HEK293 (cell line): ENCODE measurements at regions of chr2 and their contacts with region 1.

Region 1: GRCh38 chr2:172113617-172114016 is 10.9 kb upstream of the DLX2 start:
- H3K4me3 ChIP-seq: no peak overlapping the region
- H3K27ac ChIP-seq: no peak overlapping the region
- H3K4me1 ChIP-seq: no peaks in the 10 kb centered on the region
- CTCF ChIP-seq: peak; percentile 79

Region 2: GRCh38 chr2:171574149-171574795 is 539.3 kb before region 1 on chr2:
- CTCF ChIA-PET with region 1: interaction called, 14 read pairs
- POLR2A ChIA-PET with region 1: no interaction called
- H3K4me3 ChIP-seq: no peak overlapping the region
- H3K27ac ChIP-seq: no peak overlapping the region
- H3K4me1 ChIP-seq: no peaks in the 10 kb centered on the region
- CTCF ChIP-seq: peak; percentile 91

Region 3: DNA sequence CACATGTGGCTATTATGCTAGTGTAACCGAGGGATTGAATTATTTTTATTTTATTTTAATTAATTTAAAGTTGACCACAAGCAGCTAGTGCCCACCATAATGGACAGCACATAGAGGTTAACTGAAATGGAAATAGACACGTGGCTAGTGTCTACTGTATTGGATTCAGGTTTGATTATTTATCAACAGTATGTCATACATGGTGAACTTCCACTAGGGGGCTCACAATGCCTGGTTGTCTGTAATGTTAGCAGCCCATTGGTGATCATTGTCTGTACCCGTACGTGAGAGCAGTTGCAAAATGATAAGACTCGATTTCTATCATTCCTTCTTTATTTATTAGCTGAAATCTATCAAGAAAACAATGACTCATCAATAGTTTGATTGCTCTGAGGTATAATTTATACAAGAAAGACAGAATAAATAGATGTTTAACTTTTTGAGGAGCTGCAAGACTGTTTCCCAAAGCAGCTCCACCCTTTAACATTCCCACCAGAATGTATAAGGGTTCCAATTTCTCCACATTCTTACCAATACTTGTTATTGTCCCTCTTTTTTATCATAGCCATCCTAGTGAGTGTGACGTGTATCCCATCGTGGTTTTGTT is 514.8 kb before region 1 on chr2:
- CTCF ChIA-PET with region 1: interaction called, 10 read pairs
- POLR2A ChIA-PET with region 1: no interaction called
- H3K4me3 ChIP-seq: no peak overlapping the region
- H3K27ac ChIP-seq: no peak overlapping the region
- H3K4me1 ChIP-seq: no peaks in the 10 kb centered on the region
- CTCF ChIP-seq: peak; percentile 43; the same call in 1 of the 2 replicates

Region 4: DNA sequence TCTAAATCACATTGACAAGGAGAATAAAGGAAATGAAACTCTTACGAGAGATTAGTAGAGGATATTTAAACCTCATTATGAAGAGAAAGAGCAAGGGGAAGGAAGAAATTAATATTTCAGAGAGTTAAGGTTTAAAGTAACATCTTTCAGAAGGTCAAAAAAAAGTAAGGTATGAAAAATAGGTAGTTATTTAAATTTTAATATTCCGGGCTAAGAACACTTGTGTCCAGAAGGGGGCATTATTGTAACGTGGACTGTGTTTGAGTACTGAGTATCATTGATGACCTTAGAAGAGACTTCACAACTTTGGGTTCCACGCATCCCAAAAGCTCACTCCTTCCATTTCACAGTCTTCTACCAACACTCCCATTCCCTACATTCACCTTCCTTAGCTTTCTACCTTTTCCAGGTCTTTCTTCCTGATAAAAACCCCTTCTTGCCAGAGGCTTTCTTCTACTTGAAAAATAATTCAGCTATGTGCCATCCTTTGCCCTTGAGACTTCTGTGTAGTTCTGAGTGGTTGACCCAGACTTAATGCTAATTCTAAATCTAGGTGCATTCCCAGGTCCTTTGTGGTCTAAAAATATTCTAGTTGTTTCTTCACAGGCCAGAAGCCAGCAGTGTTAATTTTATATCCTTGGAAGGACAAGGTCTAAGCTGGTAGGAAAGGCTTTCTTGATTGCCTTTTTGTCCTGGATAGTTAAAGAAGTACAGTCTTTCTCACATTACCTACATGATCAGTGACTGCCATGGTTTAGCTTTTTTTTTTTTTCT is 409.9 kb before region 1 on chr2:
- CTCF ChIA-PET with region 1: interaction called, 98 read pairs
- POLR2A ChIA-PET with region 1: no interaction called
- H3K4me3 ChIP-seq: no peak overlapping the region
- H3K27ac ChIP-seq: no peak overlapping the region
- H3K4me1 ChIP-seq: peaks cover 5% of the 10 kb centered on the region
- CTCF ChIP-seq: 0 out of 2 replicates have a peak, but pooled peaks have one; percentile 27

Region 5: DNA sequence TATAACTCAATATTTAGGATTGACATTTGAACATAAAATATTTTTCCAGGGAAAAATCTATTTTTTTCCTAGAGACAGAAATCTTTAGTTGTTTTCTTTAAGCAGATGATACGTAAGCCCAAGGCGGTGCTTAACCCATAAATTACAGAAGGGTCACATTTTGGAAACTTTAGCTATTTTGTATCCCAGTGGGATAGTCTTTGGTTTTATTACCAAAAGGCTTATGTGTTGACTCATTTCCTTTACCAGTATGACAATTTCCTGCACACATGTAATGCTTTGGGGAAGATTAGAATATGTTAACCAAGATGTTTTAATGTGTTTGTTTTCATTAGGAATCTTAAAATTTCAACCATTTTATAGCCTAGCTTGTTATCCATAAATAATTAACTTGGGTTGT is 401.6 kb before region 1 on chr2:
- CTCF ChIA-PET with region 1: interaction called, 98 read pairs
- POLR2A ChIA-PET with region 1: no interaction called
- H3K4me3 ChIP-seq: no peak overlapping the region
- H3K27ac ChIP-seq: no peak overlapping the region
- H3K4me1 ChIP-seq: peaks cover 22% of the 10 kb centered on the region
- CTCF ChIP-seq: no peak

Region 6: GRCh38 chr2:171811245-171811628 is 302.4 kb before region 1 on chr2:
- CTCF ChIA-PET with region 1: interaction called, 11 read pairs
- POLR2A ChIA-PET with region 1: no interaction called
- H3K4me3 ChIP-seq: no peak overlapping the region
- H3K27ac ChIP-seq: no peak overlapping the region
- H3K4me1 ChIP-seq: peaks cover 33% of the 10 kb centered on the region
- CTCF ChIP-seq: peak; percentile 65

Region 7: GRCh38 chr2:172065105-172065504 is 48.5 kb before region 1 on chr2:
- CTCF ChIA-PET with region 1: no interaction called
- POLR2A ChIA-PET with region 1: no interaction called
- H3K4me3 ChIP-seq: no peak overlapping the region
- H3K27ac ChIP-seq: no peak overlapping the region
- H3K4me1 ChIP-seq: no peaks in the 10 kb centered on the region
- CTCF ChIP-seq: no peak

Region 8: DNA sequence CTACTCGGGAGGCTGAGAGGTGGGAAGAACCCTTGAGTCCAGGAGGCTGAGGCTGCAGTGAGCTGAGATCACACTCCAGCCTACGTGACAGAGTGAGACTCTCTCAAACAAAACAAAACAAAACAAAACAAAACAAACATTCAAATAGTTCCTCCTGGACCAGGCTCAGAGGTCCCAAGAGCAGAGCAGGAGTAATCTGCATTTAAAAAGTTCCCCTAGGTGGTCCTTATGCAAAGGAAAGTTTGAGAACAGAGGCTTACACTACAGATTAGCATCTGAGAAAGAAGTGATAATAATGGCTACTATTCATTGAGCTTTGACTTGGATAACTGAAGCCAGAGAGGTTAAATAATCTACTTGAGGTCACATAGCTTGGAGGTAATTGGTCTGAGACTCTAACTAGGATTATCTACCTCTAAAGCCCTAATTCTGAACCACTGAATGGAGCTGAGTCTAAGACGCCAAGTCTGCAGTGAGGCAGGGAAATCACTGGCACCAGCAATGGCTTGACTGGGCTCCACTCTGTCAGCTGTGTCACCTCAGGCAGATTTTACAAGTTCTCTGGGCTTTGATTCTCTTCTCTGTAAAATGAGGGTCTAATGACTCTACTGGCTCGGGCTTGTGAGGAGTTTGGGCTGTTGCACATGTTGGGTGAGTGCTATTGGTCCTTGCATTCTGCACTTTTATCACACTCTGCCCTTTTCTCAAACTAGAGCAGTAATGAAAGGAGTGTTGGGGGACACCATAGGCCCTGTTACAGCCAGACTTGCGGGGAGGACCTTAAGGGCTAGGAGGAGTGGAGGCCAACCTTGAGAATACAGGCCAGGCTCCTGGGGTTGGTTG is 18.3 kb after region 1 on chr2:
- CTCF ChIA-PET with region 1: interaction called, 30 read pairs
- POLR2A ChIA-PET with region 1: no interaction called
- H3K4me3 ChIP-seq: no peak overlapping the region
- H3K27ac ChIP-seq: no peak overlapping the region
- H3K4me1 ChIP-seq: no peaks in the 10 kb centered on the region
- CTCF ChIP-seq: no peak

Region 9: DNA sequence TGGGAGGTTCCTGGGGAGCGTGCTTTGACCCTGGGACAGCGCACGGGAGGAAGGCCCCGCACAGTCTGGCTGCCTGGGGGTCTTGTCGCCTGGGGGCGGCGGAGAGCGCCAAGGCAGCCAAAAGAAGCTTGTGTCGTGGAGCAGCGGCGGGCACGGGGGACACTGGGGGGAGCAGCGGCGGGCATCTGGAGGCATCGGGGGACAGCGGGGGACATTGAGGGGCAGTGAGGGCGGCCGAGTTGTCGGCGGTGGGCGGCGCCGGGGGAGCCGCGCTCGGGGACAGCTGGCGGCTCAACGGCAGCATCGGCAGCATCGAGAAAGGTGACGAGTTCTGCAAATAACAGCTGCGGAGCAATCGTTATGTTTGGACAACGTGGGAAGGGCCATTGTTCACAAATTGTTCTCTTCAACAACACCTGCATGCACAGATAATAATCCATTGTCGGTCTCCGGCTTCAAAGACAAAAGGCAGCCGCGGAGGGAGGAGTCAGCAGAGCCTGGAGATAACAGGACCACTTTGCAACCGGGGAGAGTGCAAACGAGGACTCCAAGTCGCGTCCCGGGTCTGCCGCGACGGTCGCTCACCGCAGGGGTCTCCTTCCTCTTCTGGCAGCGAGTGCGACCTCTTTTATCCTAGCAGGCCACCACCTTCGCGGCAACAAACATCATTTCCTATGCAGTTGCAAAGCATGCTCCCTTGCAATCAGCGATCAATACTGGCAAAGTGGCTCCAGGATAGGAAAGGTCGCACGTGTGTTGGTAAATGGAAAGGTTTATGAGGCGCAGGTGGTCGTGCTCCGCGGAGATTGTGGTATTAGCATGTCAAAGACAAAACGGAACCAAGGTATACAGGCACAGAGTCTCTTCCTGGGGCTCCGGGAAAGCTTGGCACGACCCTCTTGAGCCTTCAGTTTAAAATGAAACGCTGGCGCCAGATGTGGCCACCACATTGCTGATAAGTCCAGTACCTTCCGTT is 121.4 kb after region 1 on chr2:
- CTCF ChIA-PET with region 1: no interaction called
- POLR2A ChIA-PET with region 1: no interaction called
- H3K4me3 ChIP-seq: no peak overlapping the region
- H3K27ac ChIP-seq: no peak overlapping the region
- H3K4me1 ChIP-seq: no peaks in the 10 kb centered on the region
- CTCF ChIP-seq: peak; percentile 79